CD8-positive, alpha-beta T cell (primary cell): ENCODE measurements at regions of chr9 and their contacts with region 1.

Region 1: DNA sequence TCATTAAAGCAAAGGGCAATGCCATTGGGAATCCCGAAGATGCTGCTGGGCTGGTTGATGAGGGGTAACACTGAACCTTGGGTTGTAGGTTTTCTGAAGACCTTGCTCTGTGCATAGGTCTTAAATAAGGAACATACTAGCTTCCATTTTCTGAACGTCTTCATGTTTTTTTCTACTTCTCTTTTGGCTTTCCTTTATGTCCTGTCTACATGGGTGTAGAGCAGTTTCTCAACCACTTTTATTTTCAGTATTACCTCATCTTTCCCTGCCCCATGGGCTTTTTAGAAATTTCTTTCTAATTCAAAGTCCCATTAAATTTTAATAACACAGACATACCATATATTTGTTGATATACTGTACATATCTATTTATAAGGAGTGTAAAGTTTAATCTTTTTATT is at the start of gene IFNA14:
- DNase-seq: no peak
- ATAC-seq: no peak
- H3K4me3 ChIP-seq: no peak within 1 kb of the TSS
- H3K4me3 Mint-ChIP-seq: no peak within 1 kb of the TSS
- H3K27ac ChIP-seq: no peak within 1 kb of the TSS
- H3K27ac Mint-ChIP-seq: no peak within 1 kb of the TSS
- H3K4me1 ChIP-seq: no peaks in the 10 kb centered on the region
- H3K4me1 Mint-ChIP-seq: peaks cover 9% of the 10 kb centered on the region
- H3K27me3 ChIP-seq: no peaks in the 10 kb centered on the region
- H3K27me3 Mint-ChIP-seq: peaks cover 16% of the 10 kb centered on the region
- CTCF ChIP-seq: no peak
- total RNA-seq, gene IFNA14: not detected

Region 2: DNA sequence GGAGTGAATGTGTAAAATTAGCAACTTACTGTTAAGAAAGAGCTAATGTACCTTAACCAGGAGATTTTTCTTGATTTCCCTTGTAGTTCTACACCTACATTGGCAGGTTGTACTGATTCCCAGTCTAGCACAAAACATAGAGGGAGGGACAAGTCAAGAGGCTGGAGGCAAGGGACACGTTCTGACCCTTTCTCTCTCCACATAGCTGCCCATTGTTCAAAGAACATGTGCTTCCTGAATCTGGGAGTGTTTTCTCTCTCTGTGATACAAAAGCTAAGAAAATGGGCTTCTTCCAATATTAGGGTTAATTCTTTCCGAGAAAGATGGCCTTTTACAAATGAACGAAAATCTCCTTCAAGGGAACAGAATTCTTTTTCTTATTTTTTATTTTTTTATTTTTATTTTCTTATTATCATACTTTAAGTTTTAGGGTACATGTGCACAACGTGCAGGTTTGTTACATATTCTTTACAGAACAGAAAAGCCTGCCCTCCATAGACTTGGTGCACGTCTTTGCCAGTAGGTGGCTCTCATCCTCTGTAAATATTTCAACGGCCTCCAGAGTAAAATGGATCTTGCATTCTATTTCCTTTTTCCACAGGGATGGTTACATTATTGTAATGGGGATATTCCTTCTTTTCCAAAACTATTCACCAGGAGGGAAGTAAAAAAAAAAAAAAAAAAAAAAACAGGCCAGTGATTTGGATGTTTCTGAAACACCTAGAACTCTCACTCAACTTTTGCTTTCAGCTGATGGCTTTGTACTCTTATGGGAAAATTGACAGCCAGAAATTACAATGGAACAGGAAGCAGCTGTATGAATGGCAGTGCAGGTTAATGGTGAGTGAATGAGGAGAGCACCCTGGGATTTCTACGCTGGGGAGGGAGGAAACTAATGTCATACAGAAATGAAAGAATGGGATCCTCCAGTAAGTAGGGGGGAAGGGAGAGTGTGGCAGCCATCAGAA is 78.3 kb after region 1 on chr9:
- CTCF ChIA-PET with region 1: interaction called, 8 read pairs
- POLR2A ChIA-PET with region 1: no interaction called
- intact Hi-C with region 1: loop called in 1 of 2 experiments (anchors 5 kb)
- DNase-seq: peak in 3 of 9 experiments; percentile 29 to 63 (median 55)
- ATAC-seq: peak; percentile 86
- H3K4me3 ChIP-seq: no peak overlapping the region
- H3K4me3 Mint-ChIP-seq: no peak overlapping the region
- H3K27ac ChIP-seq: no peak overlapping the region
- H3K27ac Mint-ChIP-seq: no peak overlapping the region
- H3K4me1 ChIP-seq: no peaks in the 10 kb centered on the region
- H3K4me1 Mint-ChIP-seq: peaks cover 4% of the 10 kb centered on the region
- H3K27me3 ChIP-seq: no peaks in the 10 kb centered on the region
- H3K27me3 Mint-ChIP-seq: no peaks in the 10 kb centered on the region
- CTCF ChIP-seq: peak; percentile 94